Activated B cell treated with CpG ODN at 0.5 μM for 24 hours (primary cell): ENCODE measurements at regions of chr1 and their contacts with region 1.

Region 1: GRCh38 chr1:100037927-100038659 is 68.3 kb downstream of the SLC35A3 start:
- DNase-seq: peak; percentile 85
- ATAC-seq: peak; percentile 92
- H3K4me3 Mint-ChIP-seq: peak overlapping the region; percentile 98
- H3K27ac Mint-ChIP-seq: peak overlapping the region; percentile 98
- H3K4me1 Mint-ChIP-seq: peaks cover 56% of the 10 kb centered on the region
- H3K27me3 Mint-ChIP-seq: no peaks in the 10 kb centered on the region
- CTCF ChIP-seq: no peak

Region 2: GRCh38 chr1:99808391-99809115 is 229.5 kb before region 1 on chr1:
- CTCF ChIA-PET with region 1: no interaction called
- POLR2A ChIA-PET with region 1: no interaction called
- intact Hi-C with region 1: loop called (anchors 1 kb)
- DNase-seq: no peak
- ATAC-seq: peak; percentile 71
- H3K4me3 Mint-ChIP-seq: no peak overlapping the region
- H3K27ac Mint-ChIP-seq: no peak overlapping the region
- H3K4me1 Mint-ChIP-seq: peaks cover 4% of the 10 kb centered on the region
- H3K27me3 Mint-ChIP-seq: peaks cover 10% of the 10 kb centered on the region
- CTCF ChIP-seq: peak; percentile 52

Region 3: DNA sequence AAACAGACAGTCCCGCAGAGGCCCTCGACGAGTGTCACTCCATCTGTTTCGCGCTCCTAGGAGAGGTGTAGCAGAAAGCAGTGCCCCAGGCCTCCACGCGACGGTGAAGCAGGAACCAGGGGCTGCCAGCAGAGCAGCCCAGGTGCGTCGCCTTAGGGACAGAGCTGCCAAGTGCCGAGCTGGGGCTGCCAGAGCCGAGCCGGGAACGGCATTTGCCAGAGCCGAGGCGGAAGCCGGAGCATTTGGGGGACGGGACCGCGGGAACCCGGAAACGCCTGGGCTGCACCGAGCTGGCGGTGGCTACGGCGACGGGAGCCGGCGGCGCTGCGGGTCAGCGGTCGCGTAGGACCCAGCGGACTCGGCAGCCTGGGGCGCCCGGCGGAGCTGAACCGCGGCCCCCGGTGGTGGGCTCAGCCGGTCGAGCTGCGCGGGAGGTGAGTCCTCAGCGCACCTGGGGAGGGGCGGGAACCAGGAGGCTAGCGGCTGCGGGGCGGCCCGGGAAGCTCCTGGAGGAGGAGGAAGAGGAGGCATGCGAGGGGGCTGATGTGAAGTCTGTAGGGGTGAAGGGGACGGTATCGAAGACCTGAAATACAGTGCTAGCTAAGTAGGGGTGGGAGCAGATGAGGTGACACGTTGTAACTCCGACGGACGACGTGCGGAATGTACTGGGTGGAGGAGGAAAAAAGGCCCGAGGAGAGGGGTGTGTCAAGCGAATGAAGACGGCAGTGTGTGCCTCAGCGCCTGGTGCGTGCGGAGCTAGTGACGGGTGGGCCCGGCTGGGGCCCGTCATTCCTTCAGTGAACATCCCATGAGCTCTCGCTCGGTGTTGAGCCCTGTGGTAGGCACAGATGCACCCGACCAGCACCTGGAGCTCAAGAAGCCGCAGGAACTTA is 68.1 kb before region 1 on chr1 and contains the start of gene SLC35A3:
- CTCF ChIA-PET with region 1: no interaction called
- POLR2A ChIA-PET with region 1: interaction called, 22 read pairs
- intact Hi-C with region 1: loop called (anchors 2 kb)
- DNase-seq: peak; percentile 73
- ATAC-seq: peak; percentile 83
- H3K4me3 Mint-ChIP-seq: peak within 1 kb of the TSS; percentile 100
- H3K27ac Mint-ChIP-seq: peak within 1 kb of the TSS; percentile 95
- H3K4me1 Mint-ChIP-seq: peaks cover 27% of the 10 kb centered on the region
- H3K27me3 Mint-ChIP-seq: no peaks in the 10 kb centered on the region
- CTCF ChIP-seq: no peak
- total RNA-seq, gene SLC35A3: 18.3 and 21.1 TPM in 2 replicates

Region 4: DNA sequence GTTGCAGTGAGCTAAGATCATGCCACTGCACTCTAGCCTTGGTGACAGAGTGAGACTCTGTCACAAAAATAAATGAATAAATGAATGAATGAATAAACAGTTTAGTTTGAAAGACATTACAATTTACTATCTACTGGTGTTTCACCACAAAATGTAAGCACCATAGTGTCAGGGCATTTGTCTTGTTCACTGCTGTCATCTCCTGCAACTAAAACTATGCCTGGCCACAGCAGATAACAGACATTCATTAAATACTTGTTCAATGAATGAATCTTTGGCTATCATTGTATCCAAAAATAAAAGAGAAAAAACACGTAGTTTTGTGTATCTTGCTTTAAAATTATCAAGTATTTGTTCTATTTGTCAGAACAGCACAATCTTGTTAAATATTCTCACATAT is 62.1 kb after region 1 on chr1:
- CTCF ChIA-PET with region 1: no interaction called
- POLR2A ChIA-PET with region 1: no interaction called
- intact Hi-C with region 1: no loop called
- DNase-seq: no peak
- ATAC-seq: no peak
- H3K4me3 Mint-ChIP-seq: no peak overlapping the region
- H3K27ac Mint-ChIP-seq: no peak overlapping the region
- H3K4me1 Mint-ChIP-seq: no peaks in the 10 kb centered on the region
- H3K27me3 Mint-ChIP-seq: no peaks in the 10 kb centered on the region
- CTCF ChIP-seq: no peak

Region 5: GRCh38 chr1:100132566-100133477 is 94.7 kb after region 1 on chr1 and contains the starts of genes SASS6 and TRMT13:
- CTCF ChIA-PET with region 1: no interaction called
- POLR2A ChIA-PET with region 1: interaction called, 9 read pairs
- intact Hi-C with region 1: loop called (anchors 1 kb)
- DNase-seq: peak; percentile 81
- ATAC-seq: peak; percentile 99
- H3K4me3 Mint-ChIP-seq: peak within 1 kb of the TSS; percentile 99
- H3K27ac Mint-ChIP-seq: peak within 1 kb of the TSS; percentile 94
- H3K4me1 Mint-ChIP-seq: peaks cover 35% of the 10 kb centered on the region
- H3K27me3 Mint-ChIP-seq: no peaks in the 10 kb centered on the region
- CTCF ChIP-seq: no peak
- total RNA-seq, gene SASS6: 5.5 and 5.9 TPM in 2 replicates
- total RNA-seq, gene TRMT13: 27.2 and 31.4 TPM in 2 replicates

Region 6: DNA sequence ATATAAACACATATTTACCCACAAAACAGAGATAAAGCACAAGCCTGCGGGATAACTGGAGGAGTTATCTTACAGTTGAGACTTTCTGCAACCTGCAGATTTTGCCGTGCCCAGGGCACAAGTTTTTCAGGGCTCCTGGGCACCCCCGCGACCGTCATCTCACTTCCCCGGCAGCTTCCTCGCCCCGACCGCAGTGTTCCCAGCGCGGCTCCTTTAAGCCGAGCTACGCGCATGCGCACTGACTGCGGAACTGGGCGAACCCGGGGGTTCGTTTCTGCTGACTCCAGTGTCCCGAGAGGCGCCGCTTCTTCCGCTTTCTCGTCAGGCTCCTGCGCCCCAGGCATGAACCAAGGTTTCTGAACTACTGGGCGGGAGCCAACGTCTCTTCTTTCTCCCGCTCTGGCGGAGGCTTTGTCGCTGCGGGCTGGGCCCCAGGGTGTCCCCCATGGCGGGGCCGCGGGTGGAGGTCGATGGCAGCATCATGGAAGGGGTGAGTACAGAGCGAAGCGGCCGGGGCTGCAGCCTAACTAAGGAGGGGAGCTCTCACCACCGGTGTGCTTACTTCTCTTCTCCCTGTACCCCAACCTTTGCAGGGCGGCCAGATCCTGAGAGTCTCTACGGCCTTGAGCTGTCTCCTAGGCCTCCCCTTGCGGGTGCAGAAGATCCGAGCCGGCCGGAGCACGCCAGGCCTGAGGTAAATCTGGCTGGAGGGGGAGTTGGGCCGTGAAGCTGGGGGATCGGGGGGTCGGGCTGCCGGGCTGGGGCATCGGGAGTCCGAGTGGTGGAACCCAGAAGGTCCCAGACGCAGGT is 228.0 kb after region 1 on chr1 and contains the start of gene RTCA:
- CTCF ChIA-PET with region 1: no interaction called
- POLR2A ChIA-PET with region 1: interaction called, 4 read pairs
- intact Hi-C with region 1: loop called (anchors 1 kb)
- DNase-seq: peak; percentile 91
- ATAC-seq: peak; percentile 95
- H3K4me3 Mint-ChIP-seq: peak within 1 kb of the TSS; percentile 100
- H3K27ac Mint-ChIP-seq: peak within 1 kb of the TSS; percentile 98
- H3K4me1 Mint-ChIP-seq: peaks cover 38% of the 10 kb centered on the region
- H3K27me3 Mint-ChIP-seq: no peaks in the 10 kb centered on the region
- CTCF ChIP-seq: no peak
- total RNA-seq, gene RTCA: 32.3 and 34.5 TPM in 2 replicates

Region 7: DNA sequence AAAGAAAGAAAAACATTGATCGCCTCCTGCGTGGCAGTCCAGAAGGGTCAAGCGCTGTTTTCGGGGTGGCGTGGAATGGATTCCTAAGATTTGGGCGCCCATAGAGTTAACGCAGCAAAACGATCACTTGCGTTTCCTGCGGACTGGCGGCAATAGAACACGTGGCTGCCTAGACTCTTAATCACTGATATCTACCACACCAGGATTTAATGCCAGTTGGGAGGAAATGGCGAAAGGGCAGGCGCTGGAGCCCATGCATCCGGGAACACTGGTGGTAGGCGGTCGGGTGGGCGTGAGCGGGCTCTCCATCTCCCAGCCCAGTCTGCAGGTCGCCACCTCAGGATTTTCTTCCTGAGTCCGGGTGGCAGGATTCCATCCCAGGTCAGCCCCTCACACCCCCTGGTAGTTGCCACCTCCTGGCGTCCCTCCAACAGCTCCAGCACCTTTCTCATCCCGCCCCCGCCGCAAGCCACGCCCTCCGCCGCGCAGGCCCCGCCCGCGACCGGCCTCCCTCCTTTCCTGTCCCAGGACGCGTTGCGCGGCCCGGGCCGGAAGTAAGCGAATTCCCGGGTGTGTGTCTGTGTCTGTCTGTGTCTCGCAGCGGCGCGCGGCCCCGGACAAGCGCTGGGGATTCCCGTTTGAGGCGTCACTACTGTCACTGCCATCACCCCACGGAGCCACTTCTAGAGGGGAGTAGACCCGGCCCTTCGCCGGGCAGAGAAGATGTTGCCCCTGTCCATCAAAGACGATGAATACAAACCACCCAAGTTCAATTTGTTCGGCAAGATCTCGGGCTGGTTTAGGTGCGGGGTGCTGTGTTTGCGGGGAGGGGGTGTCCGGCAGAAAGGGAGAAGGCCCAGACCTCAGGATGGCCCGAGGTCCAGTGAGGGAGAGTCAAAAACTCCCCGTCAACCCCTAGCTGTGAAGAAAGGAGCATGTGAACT is 857.7 kb after region 1 on chr1 and contains the start of gene SLC30A7:
- CTCF ChIA-PET with region 1: no interaction called
- POLR2A ChIA-PET with region 1: interaction called, 5 read pairs
- intact Hi-C with region 1: loop called (anchors 1 kb)
- DNase-seq: peak; percentile 97
- ATAC-seq: peak; percentile 86
- H3K4me3 Mint-ChIP-seq: peak within 1 kb of the TSS; percentile 98
- H3K27ac Mint-ChIP-seq: peak within 1 kb of the TSS; percentile 95
- H3K4me1 Mint-ChIP-seq: peaks cover 29% of the 10 kb centered on the region
- H3K27me3 Mint-ChIP-seq: no peaks in the 10 kb centered on the region
- CTCF ChIP-seq: no peak
- total RNA-seq, gene SLC30A7: 21.1 and 25.7 TPM in 2 replicates